Lower leg skin (tissue), 4 donors: ENCODE measurements at regions of chr18 and their contacts with region 1.

Region 1: GRCh38 chr18:13216092-13216582 is 2.4 kb upstream of the LDLRAD4 start:
- DNase-seq: peak; percentile 75 to 93
- H3K4me3 ChIP-seq: no peak overlapping the region
- CTCF ChIP-seq: peak in 1 of 3 donors; percentile 52
- POLR2A ChIP-seq: no peak

Region 2: GRCh38 chr18:12460874-12461273 is 755.3 kb before region 1 on chr18:
- intact Hi-C with region 1: no loop called
- DNase-seq: no peak
- H3K4me3 ChIP-seq: no peak overlapping the region
- CTCF ChIP-seq: no peak
- POLR2A ChIP-seq: no peak

Region 3: GRCh38 chr18:13525381-13526029 is 309.4 kb after region 1 on chr18:
- intact Hi-C with region 1: loop called (anchors 5 kb)
- DNase-seq: no peak
- H3K4me3 ChIP-seq: no peak overlapping the region
- CTCF ChIP-seq: no peak
- POLR2A ChIP-seq: no peak

Region 4: DNA sequence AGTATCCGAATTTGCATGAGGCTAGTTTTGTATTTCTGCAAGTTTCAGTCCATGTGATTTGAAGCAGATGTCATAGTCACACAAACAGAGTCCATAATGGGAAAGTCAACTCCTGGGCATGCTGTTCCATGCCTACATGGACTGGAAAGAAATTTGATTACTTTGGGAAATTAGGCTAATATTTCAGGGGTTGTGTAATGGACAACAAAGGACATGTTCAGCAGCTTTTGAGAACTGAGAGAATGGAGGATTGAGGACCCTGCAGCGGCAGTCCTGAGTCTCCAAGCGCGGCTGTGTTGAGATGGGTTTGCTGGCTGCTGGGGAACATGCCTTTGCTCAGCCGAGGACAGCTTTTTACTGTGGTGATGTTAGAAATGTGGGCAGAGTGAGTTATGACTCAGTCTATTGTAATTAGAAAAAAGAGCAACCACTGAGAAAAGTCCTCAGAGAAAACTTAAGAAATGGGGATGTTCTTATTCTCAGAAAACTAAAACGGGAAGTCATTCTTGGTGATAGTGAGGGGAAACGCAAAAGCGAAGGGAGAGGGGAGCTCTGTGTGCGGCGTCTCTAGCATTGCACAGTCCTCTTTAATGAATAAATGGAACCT is 361.1 kb after region 1 on chr18:
- intact Hi-C with region 1: no loop called
- DNase-seq: peak in 1 of 2 donors; percentile 86
- H3K4me3 ChIP-seq: no peak overlapping the region
- CTCF ChIP-seq: no peak
- POLR2A ChIP-seq: no peak

Region 5: GRCh38 chr18:13629841-13630715 is 413.9 kb after region 1 on chr18:
- intact Hi-C with region 1: loop called (anchors 5 kb)
- DNase-seq: peak in 1 of 2 donors; percentile 84
- H3K4me3 ChIP-seq: no peak overlapping the region
- CTCF ChIP-seq: peak in 1 of 3 donors; percentile 70
- POLR2A ChIP-seq: no peak